ENCODE measurements at regions of chr1 and their contacts with region 1.

Region 1: GRCh38 chr1:147567594-147568381 is 26.5 kb downstream of the BCL9 start:
- DNase-seq: peak in 1 of 2 experiments; percentile 49
- H3K4me3 ChIP-seq: peak overlapping the region in 3 of 4 experiments; percentile 22 to 50 (median 28); a peak in 6 of 8 replicates
- H3K27ac ChIP-seq: peak overlapping the region; percentile 62
- H3K4me1 ChIP-seq: peaks cover 2 to 16% (median 11%) of the 10 kb centered on the region in 4 experiments; a peak in 4 of 7 replicates
- H3K27me3 ChIP-seq: peaks cover 0 to under 1% (median 0%) of the 10 kb centered on the region in 4 experiments; a peak in 1 of 7 replicates
- CTCF ChIP-seq: no peak
- EP300 ChIP-seq: no peak
- POLR2A ChIP-seq: peak in 1 of 2 experiments; percentile 52; a peak in 1 of 3 replicates
- RAD21 ChIP-seq: no peak

Region 2: GRCh38 chr1:147434921-147435320 is 132.9 kb before region 1 on chr1:
- CTCF ChIA-PET with region 1: no interaction called
- POLR2A ChIA-PET with region 1: no interaction called
- DNase-seq: no peak
- H3K4me3 ChIP-seq: no peak overlapping the region
- H3K27ac ChIP-seq: no peak overlapping the region
- H3K4me1 ChIP-seq: peaks cover 0 to 5% (median 0%) of the 10 kb centered on the region in 4 experiments; a peak in 2 of 7 replicates
- H3K27me3 ChIP-seq: no peaks in the 10 kb centered on the region
- CTCF ChIP-seq: no peak
- EP300 ChIP-seq: no peak
- POLR2A ChIP-seq: no peak
- RAD21 ChIP-seq: no peak

Region 3: DNA sequence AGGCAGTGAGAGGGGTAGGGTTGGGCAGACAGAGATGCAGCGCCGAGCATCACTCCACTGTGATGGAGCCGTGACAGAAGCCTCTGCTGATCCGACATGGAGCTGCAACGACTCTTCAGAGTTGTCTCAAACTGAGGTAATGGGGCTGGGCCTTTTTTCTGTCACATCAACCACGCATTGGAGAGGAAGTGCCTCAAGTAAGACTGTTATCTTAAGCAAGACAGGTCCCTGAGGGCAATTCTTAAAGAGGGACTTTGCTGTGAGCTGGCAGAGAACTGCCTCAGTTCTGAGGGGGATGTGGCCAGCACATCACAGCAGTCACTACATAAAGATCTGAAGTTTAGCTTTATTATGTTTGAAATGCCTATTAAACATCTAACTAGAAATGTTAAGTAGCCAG is 80.9 kb before region 1 on chr1:
- CTCF ChIA-PET with region 1: no interaction called
- POLR2A ChIA-PET with region 1: no interaction called
- DNase-seq: no peak
- H3K4me3 ChIP-seq: no peak overlapping the region
- H3K27ac ChIP-seq: no peak overlapping the region
- H3K4me1 ChIP-seq: no peaks in the 10 kb centered on the region
- H3K27me3 ChIP-seq: peaks cover 0 to 1% (median 0%) of the 10 kb centered on the region in 4 experiments; a peak in 1 of 7 replicates
- CTCF ChIP-seq: no peak
- EP300 ChIP-seq: no peak
- POLR2A ChIP-seq: no peak
- RAD21 ChIP-seq: no peak

Region 4: GRCh38 chr1:147579934-147580537 is 12.2 kb after region 1 on chr1:
- CTCF ChIA-PET with region 1: interaction called, 5 read pairs
- POLR2A ChIA-PET with region 1: interaction called, 10 read pairs
- DNase-seq: no peak
- H3K4me3 ChIP-seq: no peak overlapping the region
- H3K27ac ChIP-seq: no peak overlapping the region
- H3K4me1 ChIP-seq: peaks cover 0 to 8% (median 0%) of the 10 kb centered on the region in 4 experiments; a peak in 1 of 7 replicates
- H3K27me3 ChIP-seq: peaks cover 0 to 18% (median 13%) of the 10 kb centered on the region in 4 experiments; a peak in 6 of 7 replicates
- CTCF ChIP-seq: no peak
- EP300 ChIP-seq: no peak
- POLR2A ChIP-seq: no peak
- RAD21 ChIP-seq: no peak